A549 (cell line): ENCODE measurements at regions of chr6 and their contacts with region 1.

Region 1: DNA sequence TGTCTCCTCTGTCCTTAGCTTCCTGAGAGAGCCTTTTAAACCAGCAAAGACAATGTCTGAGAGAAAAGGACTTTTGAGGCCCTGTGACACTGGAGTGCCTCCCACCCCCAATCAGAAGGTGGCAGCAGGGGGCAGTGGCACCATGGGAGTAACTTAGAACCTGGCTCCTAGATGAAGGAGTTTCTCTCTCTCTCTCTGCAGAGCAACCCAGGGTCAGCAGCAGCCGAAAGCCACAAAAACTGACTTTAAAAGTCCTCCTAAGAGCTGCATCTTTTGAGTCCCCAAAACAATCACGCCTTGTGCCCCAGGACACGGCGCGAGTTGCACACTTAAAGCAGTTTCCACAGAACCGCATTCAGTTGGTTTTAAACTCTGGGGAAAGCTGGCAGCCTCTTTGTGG is 5.3 kb upstream of the TCP11 start:
- DNase-seq: peak; percentile 35 to 42
- ATAC-seq: peak; percentile 85 to 94; a peak in 4 of 6 replicates
- H3K4me3 ChIP-seq: no peak overlapping the region
- H3K27ac ChIP-seq: no peak overlapping the region
- H3K4me1 ChIP-seq: peaks cover 14% of the 10 kb centered on the region
- CTCF ChIP-seq: peak; percentile 67
- EP300 ChIP-seq: no peak
- POLR2A ChIP-seq: no peak
- RAD21 ChIP-seq: peak; percentile 84 to 89

Region 2: DNA sequence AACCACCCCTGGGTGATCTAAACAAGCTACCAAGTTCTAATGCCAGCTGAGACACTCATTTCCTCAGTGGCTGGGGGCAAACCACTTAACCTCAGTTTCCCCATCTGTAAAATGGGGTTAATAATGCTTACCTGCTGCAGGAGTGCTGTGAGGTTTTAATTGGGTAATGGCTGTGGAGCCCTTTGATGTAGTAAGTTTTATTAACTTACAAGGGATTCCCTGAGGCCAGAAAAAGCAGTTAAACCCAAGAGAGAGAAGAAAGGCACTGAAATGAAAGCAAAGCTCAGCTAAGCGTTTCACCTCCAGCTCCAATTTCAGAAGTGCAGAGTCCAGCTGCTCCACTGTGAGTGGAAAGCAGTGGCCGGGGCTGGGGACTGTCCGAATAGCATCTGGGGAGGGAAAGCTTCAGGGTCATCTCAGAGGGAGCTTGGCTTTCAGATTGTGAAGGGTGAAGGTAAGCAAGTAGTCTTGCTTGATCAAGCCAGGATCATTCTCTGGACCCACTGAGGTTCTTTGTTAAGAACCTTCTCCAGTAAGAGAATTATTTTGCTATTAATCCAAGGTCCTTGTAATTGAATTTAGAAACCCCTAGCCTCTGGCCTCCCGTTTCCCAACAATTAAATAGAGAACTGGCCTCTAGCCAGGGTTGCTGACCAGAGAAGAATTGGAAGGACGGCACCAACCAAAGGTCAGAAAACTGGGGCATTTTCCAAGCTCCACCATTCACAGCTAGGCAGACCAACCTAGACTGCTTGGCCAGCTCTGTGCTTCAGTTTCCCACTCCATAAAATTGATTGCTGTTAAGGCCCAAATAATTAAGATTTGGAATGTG is 15.5 kb after region 1 on chr6:
- CTCF ChIA-PET with region 1: interaction called, 17 read pairs
- POLR2A ChIA-PET with region 1: no interaction called
- DNase-seq: no peak
- ATAC-seq: no peak
- H3K4me3 ChIP-seq: no peak overlapping the region
- H3K27ac ChIP-seq: no peak overlapping the region
- H3K4me1 ChIP-seq: peaks cover 17% of the 10 kb centered on the region
- CTCF ChIP-seq: no peak
- EP300 ChIP-seq: no peak
- POLR2A ChIP-seq: no peak
- RAD21 ChIP-seq: no peak

Region 3: DNA sequence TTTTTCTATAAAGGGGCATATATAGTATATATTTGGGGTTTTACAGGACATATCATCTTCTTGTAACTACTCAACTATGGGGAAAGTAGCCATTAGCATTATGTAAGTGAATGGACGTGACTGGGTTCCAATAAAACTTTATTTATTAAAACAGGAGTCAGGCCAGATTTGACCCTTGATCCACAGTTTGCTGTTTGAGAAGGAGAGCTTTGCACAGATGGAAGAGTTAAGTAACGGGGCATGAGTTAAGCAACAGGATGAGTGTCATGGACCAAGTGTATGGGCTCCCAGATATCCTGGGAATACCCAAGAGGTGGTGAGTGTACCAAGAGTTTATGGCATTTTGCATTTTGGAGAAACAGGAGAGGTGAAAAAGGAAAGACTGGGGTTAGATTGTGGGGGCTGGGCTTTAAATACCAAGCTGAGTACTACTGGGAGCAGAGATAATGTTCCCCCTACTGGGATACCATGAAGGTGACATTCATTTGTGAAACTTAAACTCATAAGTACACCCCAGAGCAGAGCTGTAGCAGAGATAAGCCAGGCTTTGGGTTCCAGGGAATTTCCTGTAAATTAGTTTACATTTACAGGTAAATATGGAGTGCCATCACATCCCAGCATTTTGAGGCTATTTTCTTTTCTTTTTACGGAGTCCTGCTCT is 48.8 kb after region 1 on chr6:
- CTCF ChIA-PET with region 1: interaction called, 206 read pairs
- POLR2A ChIA-PET with region 1: no interaction called
- DNase-seq: no peak
- ATAC-seq: no peak
- H3K4me3 ChIP-seq: no peak overlapping the region
- H3K27ac ChIP-seq: no peak overlapping the region
- H3K4me1 ChIP-seq: no peaks in the 10 kb centered on the region
- CTCF ChIP-seq: no peak
- EP300 ChIP-seq: no peak
- POLR2A ChIP-seq: no peak
- RAD21 ChIP-seq: no peak

Region 4: DNA sequence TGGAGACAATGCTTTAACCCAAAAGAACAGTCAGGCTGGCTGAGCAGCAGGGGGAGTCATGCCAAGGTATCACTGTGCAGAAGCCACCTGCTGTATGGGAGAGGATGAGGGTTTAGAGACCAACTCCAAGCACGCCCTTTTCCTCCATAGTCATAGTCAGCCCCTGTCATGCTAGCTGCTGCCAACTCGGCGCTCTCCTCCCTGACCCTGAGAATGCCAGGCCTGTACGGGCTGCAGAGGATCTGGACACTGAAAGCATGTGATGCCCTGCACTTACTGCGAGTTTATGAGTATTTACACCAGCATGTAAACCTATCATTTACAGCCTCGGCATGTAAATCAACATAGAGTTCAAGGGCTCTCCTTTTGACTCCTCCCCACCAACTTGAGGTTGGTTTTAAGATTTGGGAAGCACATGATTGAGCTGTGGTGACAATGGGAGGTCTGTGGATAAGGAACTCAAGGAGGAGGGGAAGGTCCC is 55.7 kb after region 1 on chr6:
- CTCF ChIA-PET with region 1: interaction called, 206 read pairs
- POLR2A ChIA-PET with region 1: no interaction called
- DNase-seq: no peak
- ATAC-seq: peak in 1 of 2 experiments; percentile 33; a peak in 3 of 6 replicates
- H3K4me3 ChIP-seq: no peak overlapping the region
- H3K27ac ChIP-seq: no peak overlapping the region
- H3K4me1 ChIP-seq: no peaks in the 10 kb centered on the region; the same call in 2 of the 3 replicates
- CTCF ChIP-seq: no peak
- EP300 ChIP-seq: no peak
- POLR2A ChIP-seq: no peak
- RAD21 ChIP-seq: no peak

Region 5: DNA sequence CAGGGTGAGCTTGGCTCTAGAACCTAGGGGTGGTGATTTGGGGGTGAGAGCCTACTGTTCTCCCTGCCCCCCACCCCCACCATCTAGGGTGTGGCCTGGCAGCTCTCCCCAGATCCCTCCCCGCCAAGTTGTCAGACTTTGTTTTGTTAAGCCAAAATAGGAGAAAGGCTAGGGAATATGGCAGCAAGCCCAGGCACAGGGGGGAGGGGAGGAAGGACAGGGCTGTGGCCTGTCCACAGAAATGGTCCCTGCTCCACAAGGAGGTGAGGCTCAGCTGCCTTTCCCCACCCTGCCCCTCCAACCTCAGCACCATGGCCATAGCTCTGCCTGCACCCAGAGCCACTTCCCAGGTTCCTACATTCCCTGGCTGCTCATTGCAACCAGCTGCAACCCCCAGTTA is 84.5 kb after region 1 on chr6:
- CTCF ChIA-PET with region 1: interaction called, 107 read pairs
- POLR2A ChIA-PET with region 1: no interaction called
- DNase-seq: no peak
- ATAC-seq: no peak
- H3K4me3 ChIP-seq: no peak overlapping the region
- H3K27ac ChIP-seq: no peak overlapping the region
- H3K4me1 ChIP-seq: no peaks in the 10 kb centered on the region
- CTCF ChIP-seq: no peak
- EP300 ChIP-seq: no peak
- POLR2A ChIP-seq: no peak
- RAD21 ChIP-seq: no peak